CD4-positive, alpha-beta memory T cell (primary cell): ENCODE measurements at regions of chr1 and their contacts with region 1.

Region 1: DNA sequence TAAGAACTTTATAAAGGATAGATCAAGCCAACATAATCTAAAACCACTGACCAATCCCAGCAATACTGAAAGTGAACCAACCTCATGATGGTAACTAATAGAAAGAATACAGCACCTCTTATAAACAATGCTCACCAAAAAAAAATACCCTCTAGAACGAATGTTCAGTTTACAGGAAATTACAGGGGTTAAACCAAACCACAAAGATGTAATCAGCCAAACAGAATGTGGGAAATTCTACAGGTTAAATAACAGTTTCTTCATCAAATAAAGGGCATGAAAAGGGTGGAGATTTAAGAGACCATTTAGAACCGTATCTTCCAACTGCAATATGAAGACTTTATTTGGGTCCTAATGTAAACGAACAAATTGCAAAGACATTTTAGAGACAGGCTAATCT is 30.4 kb downstream of the ARID4B start:
- DNase-seq: peak; percentile 53 to 91 (median 86)
- H3K4me3 ChIP-seq: peak overlapping the region in 1 of 2 donors; percentile 2
- H3K4me3 Mint-ChIP-seq: peak overlapping the region; percentile 58 to 86 (median 80)
- H3K27ac ChIP-seq: peak overlapping the region; percentile 86
- H3K27ac Mint-ChIP-seq: peak overlapping the region; percentile 84 to 99 (median 96)
- H3K4me1 ChIP-seq: peaks cover 83% of the 10 kb centered on the region
- H3K4me1 Mint-ChIP-seq: peaks cover 37 to 64% (median 51%) of the 10 kb centered on the region in 4 donors
- H3K27me3 ChIP-seq: no peaks in the 10 kb centered on the region
- H3K27me3 Mint-ChIP-seq: no peaks in the 10 kb centered on the region

Region 2: GRCh38 chr1:235313931-235314678 is 16.5 kb after region 1 on chr1:
- CTCF ChIA-PET with region 1: no interaction called
- POLR2A ChIA-PET with region 1: no interaction called
- intact Hi-C with region 1: loop called (anchors 2 kb)
- DNase-seq: no peak
- H3K4me3 ChIP-seq: no peak overlapping the region
- H3K4me3 Mint-ChIP-seq: peak overlapping the region; percentile 38 to 85 (median 71)
- H3K27ac ChIP-seq: peak overlapping the region; percentile 5
- H3K27ac Mint-ChIP-seq: peak overlapping the region; percentile 49 to 86 (median 69)
- H3K4me1 ChIP-seq: peaks cover 87% of the 10 kb centered on the region
- H3K4me1 Mint-ChIP-seq: peaks cover 51 to 73% (median 62%) of the 10 kb centered on the region in 4 donors
- H3K27me3 ChIP-seq: no peaks in the 10 kb centered on the region
- H3K27me3 Mint-ChIP-seq: no peaks in the 10 kb centered on the region